ENCODE measurements at regions of chr12 and their contacts with region 1.

Region 1: GRCh38 chr12:30806989-30807694 is 52.4 kb upstream of the CAPRIN2 start:
- DNase-seq: no peak
- H3K4me3 Mint-ChIP-seq: no peak overlapping the region
- H3K27ac Mint-ChIP-seq: no peak overlapping the region
- H3K4me1 Mint-ChIP-seq: no peaks in the 10 kb centered on the region
- H3K27me3 Mint-ChIP-seq: peaks cover 34% of the 10 kb centered on the region

Region 2: GRCh38 chr12:29519585-29520182 is 1287.5 kb before region 1 on chr12:
- intact Hi-C with region 1: loop called (anchors 5 kb)
- DNase-seq: no peak
- H3K4me3 Mint-ChIP-seq: no peak overlapping the region
- H3K27ac Mint-ChIP-seq: no peak overlapping the region
- H3K4me1 Mint-ChIP-seq: no peaks in the 10 kb centered on the region
- H3K27me3 Mint-ChIP-seq: no peaks in the 10 kb centered on the region

Region 3: DNA sequence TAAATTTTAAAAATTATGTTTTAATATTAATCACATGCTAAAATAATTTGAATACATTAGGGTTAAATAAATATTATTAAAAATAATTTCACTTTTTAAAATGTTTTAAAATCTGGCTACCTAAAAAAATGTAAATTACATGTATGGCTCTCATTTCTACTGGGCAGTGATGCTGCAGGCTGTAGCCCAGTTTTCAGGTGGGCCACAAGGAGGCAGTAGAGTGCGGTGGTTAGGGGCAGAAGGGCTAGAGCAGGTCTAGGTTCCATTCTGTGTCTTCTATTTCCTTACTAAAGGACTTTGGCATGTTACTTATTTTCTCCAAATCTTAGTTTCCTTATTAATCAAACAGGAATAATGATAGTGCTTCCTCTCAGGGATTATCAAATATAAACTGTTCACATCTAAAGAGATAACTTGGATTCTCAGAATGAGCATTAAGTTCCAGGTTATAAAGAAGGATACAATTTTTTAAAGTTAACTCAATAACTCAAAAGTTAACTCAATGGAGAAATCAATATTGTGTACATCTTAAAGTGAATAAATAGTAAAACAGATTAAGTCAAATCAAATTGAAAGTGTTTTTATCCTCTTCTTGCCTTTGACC is 1254.7 kb before region 1 on chr12:
- intact Hi-C with region 1: loop called (anchors 1 kb)
- DNase-seq: peak; percentile 39
- H3K4me3 Mint-ChIP-seq: no peak overlapping the region
- H3K27ac Mint-ChIP-seq: no peak overlapping the region
- H3K4me1 Mint-ChIP-seq: no peaks in the 10 kb centered on the region
- H3K27me3 Mint-ChIP-seq: peaks cover 1% of the 10 kb centered on the region

Region 4: GRCh38 chr12:30500532-30501209 is 306.5 kb before region 1 on chr12:
- intact Hi-C with region 1: loop called (anchors 10 kb)
- DNase-seq: no peak
- H3K4me3 Mint-ChIP-seq: no peak overlapping the region
- H3K27ac Mint-ChIP-seq: no peak overlapping the region
- H3K4me1 Mint-ChIP-seq: no peaks in the 10 kb centered on the region
- H3K27me3 Mint-ChIP-seq: no peaks in the 10 kb centered on the region

Measured in activated T-helper 2 cell treated with anti-CD3 and anti-CD28 coated beads, Interferon-gamma antibody, Interleukin-2, Interleukin-4, amounts not matched to agents 10 μg/mL and 5 μg/mL and 100 μg/mL, durations not matched to agents 14 hours and 24 hours and 36 hours (primary cell).